Activated naive CD4-positive, alpha-beta T cell treated with anti-CD3 and anti-CD28 coated beads for 36 hours (primary cell): ENCODE measurements at regions of chr1 and their contacts with region 1.

Region 1: GRCh38 chr1:167553136-167554027 is at the start of gene CREG1:
- DNase-seq: peak; percentile 93
- H3K4me3 Mint-ChIP-seq: peak within 1 kb of the TSS; percentile 79
- H3K27ac Mint-ChIP-seq: no peak within 1 kb of the TSS
- H3K4me1 Mint-ChIP-seq: peaks cover 40% of the 10 kb centered on the region
- H3K27me3 Mint-ChIP-seq: no peaks in the 10 kb centered on the region
- total RNA-seq, gene CREG1: 9.6 to 10.7 TPM

Region 2: GRCh38 chr1:166875734-166876539 is 677.4 kb before region 1 on chr1 and contains the start of gene TADA1:
- CTCF ChIA-PET with region 1: no interaction called
- intact Hi-C with region 1: loop called (anchors 1 kb)
- DNase-seq: peak; percentile 100
- H3K4me3 Mint-ChIP-seq: peak within 1 kb of the TSS; percentile 99
- H3K27ac Mint-ChIP-seq: peak within 1 kb of the TSS; percentile 97
- H3K4me1 Mint-ChIP-seq: peaks cover 37% of the 10 kb centered on the region
- H3K27me3 Mint-ChIP-seq: no peaks in the 10 kb centered on the region
- total RNA-seq, gene TADA1: 19.6 to 19.9 TPM

Region 3: GRCh38 chr1:167121375-167122120 is 431.8 kb before region 1 on chr1:
- CTCF ChIA-PET with region 1: interaction called, 5 read pairs
- intact Hi-C with region 1: loop called (anchors 5 kb)
- DNase-seq: peak; percentile 58
- H3K4me3 Mint-ChIP-seq: peak overlapping the region; percentile 81
- H3K27ac Mint-ChIP-seq: no peak overlapping the region
- H3K4me1 Mint-ChIP-seq: peaks cover 3% of the 10 kb centered on the region
- H3K27me3 Mint-ChIP-seq: peaks cover 2% of the 10 kb centered on the region

Region 4: DNA sequence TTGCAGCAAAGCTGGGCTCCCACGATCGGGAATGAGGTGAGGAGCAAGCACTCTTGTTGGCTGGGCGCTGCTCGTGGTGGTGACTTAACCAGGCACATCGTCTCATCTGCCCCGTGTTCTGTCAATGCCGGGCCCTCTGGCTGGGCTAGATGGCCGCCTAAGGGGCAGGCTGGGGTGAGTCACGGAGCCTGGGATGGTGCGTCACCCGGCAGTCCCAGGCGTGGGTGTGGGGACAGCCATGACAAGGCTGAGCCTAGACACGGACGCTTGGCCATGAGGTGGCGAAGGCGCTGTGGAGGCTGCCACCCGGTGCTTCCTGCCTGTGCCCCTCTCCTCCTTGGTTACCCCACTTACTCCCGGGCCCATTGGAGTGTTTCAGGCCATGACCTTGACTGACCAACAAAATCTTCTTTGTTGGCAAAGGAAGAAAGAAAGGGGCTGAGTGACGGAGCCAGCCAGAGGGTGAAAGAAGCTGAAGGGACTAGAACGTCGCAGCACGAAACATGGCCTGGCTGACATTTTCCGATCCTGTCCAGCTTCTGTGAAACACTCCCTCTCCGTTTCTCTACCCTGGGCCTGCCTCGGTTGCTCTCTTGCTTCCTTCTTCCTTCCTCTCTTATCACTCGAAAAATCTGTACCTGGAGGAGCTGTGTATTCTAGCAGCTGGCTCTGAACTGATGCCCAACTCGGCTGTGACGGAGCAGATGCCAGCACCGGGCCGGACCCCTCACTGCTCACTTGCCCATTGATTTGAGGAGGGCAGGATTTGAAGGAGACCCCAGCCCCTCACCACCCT is 35.6 kb before region 1 on chr1:
- CTCF ChIA-PET with region 1: interaction called, 3 read pairs
- intact Hi-C with region 1: loop called (anchors 1 kb)
- DNase-seq: peak; percentile 95
- H3K4me3 Mint-ChIP-seq: peak overlapping the region; percentile 90
- H3K27ac Mint-ChIP-seq: peak overlapping the region; percentile 96
- H3K4me1 Mint-ChIP-seq: peaks cover 25% of the 10 kb centered on the region
- H3K27me3 Mint-ChIP-seq: no peaks in the 10 kb centered on the region

Region 5: GRCh38 chr1:167563579-167564246 is 10.3 kb after region 1 on chr1:
- CTCF ChIA-PET with region 1: interaction called, 23 read pairs
- intact Hi-C with region 1: no loop called
- DNase-seq: no peak
- H3K4me3 Mint-ChIP-seq: no peak overlapping the region
- H3K27ac Mint-ChIP-seq: no peak overlapping the region
- H3K4me1 Mint-ChIP-seq: no peaks in the 10 kb centered on the region
- H3K27me3 Mint-ChIP-seq: no peaks in the 10 kb centered on the region

Region 6: DNA sequence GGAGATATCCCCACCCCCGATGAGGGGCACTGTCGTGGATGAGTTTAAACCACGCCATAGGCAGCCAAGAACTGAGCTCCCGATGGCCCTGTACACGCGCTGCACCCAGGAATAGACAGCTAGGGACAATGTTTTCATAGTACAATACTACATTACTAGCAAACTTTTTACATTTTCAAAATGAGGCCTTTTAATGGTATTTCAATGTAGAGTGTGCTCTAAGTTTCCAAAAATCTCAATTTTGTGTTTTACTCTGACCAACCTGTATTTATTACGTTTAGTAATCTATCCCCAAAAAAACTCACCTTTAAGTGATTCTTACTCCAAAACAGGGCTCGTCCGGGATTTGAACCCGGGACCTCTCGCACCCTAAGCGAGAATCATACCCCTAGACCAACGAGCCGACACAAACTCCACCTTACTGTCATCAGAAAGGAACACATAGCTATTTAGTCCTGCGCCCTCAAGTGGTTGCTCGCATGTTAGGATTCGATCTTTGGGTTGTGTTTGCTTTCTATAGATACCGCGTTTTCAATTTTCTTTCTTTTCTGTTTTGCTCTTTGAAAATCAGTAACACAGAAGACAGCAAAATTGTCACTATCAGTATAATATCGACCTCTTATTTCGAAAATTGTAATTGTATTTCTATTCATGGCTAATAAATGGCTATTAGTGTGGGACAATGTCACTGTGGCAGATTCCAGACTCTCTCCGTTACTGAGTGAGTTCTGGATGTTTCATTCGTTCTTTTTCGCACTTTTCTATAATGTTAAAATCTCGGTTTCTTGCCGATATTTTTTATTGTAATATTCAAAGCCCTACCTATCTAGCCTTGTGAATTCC is 162.0 kb after region 1 on chr1:
- CTCF ChIA-PET with region 1: interaction called, 3 read pairs
- intact Hi-C with region 1: loop called (anchors 1 kb)
- DNase-seq: peak; percentile 95
- H3K4me3 Mint-ChIP-seq: peak overlapping the region; percentile 79
- H3K27ac Mint-ChIP-seq: peak overlapping the region; percentile 92
- H3K4me1 Mint-ChIP-seq: peaks cover 28% of the 10 kb centered on the region
- H3K27me3 Mint-ChIP-seq: peaks cover 5% of the 10 kb centered on the region

Region 7: DNA sequence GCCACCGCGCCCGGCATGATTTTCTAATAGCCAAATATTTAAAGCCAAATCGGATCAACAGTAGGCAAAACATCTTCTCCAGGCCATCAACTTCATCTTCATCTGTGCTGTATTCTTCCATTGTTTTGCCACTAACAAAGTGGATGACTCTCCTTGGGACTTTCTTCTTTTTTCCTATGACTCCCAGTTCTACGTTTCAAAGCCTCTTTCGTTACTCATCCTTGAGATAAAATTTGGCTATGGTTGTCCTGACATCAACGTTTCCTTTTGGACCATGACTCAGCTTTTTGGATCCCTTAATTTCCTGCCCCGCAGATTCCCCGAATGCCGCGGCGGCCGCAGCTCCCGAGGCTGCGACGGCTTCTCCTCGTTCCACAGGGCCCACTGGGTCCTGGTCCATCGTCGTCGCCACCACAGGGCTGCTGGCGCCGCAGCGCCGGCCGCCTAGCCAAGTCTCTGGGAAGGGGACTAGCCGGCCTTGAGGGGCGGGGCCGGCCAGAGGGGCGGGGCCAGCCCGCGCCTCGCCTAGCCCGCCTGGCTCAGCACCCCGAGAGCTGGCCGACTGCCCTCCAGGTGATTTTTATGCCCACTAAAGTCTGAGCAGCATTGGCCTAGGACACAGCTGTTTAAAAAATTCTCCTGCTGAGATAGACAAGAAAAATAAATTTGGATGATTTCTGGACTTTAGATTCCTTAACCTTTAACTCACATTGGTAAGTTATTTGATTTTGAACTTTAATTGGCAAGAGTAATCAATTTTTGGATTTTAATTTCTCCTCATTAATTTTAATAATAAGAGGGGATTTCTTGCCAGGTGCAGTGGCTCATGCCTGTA is 266.7 kb after region 1 on chr1:
- CTCF ChIA-PET with region 1: no interaction called
- intact Hi-C with region 1: no loop called
- DNase-seq: peak; percentile 20
- H3K4me3 Mint-ChIP-seq: peak overlapping the region; percentile 70
- H3K27ac Mint-ChIP-seq: no peak overlapping the region
- H3K4me1 Mint-ChIP-seq: peaks cover 5% of the 10 kb centered on the region
- H3K27me3 Mint-ChIP-seq: peaks cover 10% of the 10 kb centered on the region